CD14-positive monocyte (primary cell): ENCODE measurements at regions of chr14 and their contacts with region 1.

Region 1: GRCh38 chr14:80996049-80996901 is 40.9 kb downstream of the TSHR start:
- DNase-seq: peak; percentile 70 to 89 (median 81)
- H3K4me3 ChIP-seq: peak overlapping the region in 2 of 3 experiments; percentile 12 to 40
- H3K4me3 Mint-ChIP-seq: peak overlapping the region; percentile 59 to 72
- H3K27ac ChIP-seq: no peak overlapping the region
- H3K27ac Mint-ChIP-seq: peak overlapping the region in 4 of 7 donors; percentile 27 to 88 (median 64)
- H3K4me1 ChIP-seq: peaks cover 7 to 10% of the 10 kb centered on the region in 2 donors
- H3K4me1 Mint-ChIP-seq: peaks cover 15% of the 10 kb centered on the region
- H3K27me3 ChIP-seq: no peaks in the 10 kb centered on the region
- H3K27me3 Mint-ChIP-seq: no peaks in the 10 kb centered on the region
- CTCF ChIP-seq: peak; percentile 80

Region 2: GRCh38 chr14:81170104-81170828 is 174.0 kb after region 1 on chr14:
- intact Hi-C with region 1: loop called (anchors 5 kb)
- DNase-seq: peak; percentile 75 to 84 (median 80)
- H3K4me3 ChIP-seq: peak overlapping the region; percentile 47 to 93 (median 76)
- H3K4me3 Mint-ChIP-seq: peak overlapping the region; percentile 87 to 95
- H3K27ac ChIP-seq: peak overlapping the region; percentile 90 to 94
- H3K27ac Mint-ChIP-seq: peak overlapping the region; percentile 95 to 99 (median 97)
- H3K4me1 ChIP-seq: peaks cover 13 to 14% of the 10 kb centered on the region in 2 donors
- H3K4me1 Mint-ChIP-seq: peaks cover 31% of the 10 kb centered on the region
- H3K27me3 ChIP-seq: no peaks in the 10 kb centered on the region
- H3K27me3 Mint-ChIP-seq: no peaks in the 10 kb centered on the region
- CTCF ChIP-seq: peak; percentile 82

Region 3: GRCh38 chr14:81625343-81625742 is 629.1 kb after region 1 on chr14:
- intact Hi-C with region 1: no loop called
- DNase-seq: no peak
- H3K4me3 ChIP-seq: no peak overlapping the region
- H3K4me3 Mint-ChIP-seq: no peak overlapping the region
- H3K27ac ChIP-seq: no peak overlapping the region
- H3K27ac Mint-ChIP-seq: no peak overlapping the region
- H3K4me1 ChIP-seq: no peaks in the 10 kb centered on the region
- H3K4me1 Mint-ChIP-seq: peaks cover 5% of the 10 kb centered on the region
- H3K27me3 ChIP-seq: no peaks in the 10 kb centered on the region
- H3K27me3 Mint-ChIP-seq: peaks cover 0 to 3% (median 0%) of the 10 kb centered on the region in 3 donors
- CTCF ChIP-seq: no peak